Activated T-helper 2 cell treated with anti-CD3 and anti-CD28 coated beads, Interferon-gamma antibody, Interleukin-2, Interleukin-4, amounts not matched to agents 10 μg/mL and 5 μg/mL and 100 μg/mL, durations not matched to agents 14 hours and 24 hours and 36 hours (primary cell): ENCODE measurements at regions of chr1 and their contacts with region 1.

Region 1: DNA sequence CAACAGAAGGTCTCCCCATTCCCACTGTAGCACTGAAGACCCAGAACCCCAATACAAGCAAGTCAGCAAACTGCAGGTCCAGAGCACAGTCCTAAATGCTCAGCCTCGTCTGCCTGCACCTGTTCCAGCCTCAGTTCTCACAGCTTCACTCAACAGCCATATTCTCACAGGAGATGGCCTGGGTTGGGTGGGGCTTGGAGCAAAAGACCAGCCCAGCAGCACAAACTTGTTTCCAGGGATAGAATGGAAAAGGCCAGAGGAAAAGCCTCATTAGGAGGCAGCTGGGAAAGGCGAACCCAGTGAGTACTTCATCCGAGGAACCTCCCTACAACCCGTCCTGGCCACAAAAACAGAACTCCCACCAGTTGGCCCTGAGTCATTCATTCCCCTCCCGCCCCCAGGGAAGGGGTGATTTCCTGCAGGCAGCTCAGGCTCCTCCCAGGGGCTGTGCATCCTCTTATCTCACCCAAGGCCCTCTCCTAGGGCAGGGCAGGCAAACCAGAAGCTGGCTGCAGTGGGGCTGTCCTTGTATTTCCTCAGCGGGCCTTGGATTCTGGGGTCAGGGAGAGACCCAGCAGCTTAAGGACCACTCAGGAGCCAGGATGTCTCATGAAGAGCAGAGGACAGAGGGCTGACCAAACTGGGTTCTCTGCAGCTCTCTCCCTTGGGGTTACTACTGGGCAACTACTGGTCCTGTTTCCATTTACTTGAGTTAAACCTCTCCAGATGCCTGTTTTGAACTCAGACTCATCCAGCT is 7.4 kb upstream of the MPL start:
- DNase-seq: no peak
- H3K4me3 Mint-ChIP-seq: no peak overlapping the region
- H3K27ac Mint-ChIP-seq: peak overlapping the region; percentile 65
- H3K4me1 Mint-ChIP-seq: peaks cover 22% of the 10 kb centered on the region
- H3K27me3 Mint-ChIP-seq: no peaks in the 10 kb centered on the region

Region 2: DNA sequence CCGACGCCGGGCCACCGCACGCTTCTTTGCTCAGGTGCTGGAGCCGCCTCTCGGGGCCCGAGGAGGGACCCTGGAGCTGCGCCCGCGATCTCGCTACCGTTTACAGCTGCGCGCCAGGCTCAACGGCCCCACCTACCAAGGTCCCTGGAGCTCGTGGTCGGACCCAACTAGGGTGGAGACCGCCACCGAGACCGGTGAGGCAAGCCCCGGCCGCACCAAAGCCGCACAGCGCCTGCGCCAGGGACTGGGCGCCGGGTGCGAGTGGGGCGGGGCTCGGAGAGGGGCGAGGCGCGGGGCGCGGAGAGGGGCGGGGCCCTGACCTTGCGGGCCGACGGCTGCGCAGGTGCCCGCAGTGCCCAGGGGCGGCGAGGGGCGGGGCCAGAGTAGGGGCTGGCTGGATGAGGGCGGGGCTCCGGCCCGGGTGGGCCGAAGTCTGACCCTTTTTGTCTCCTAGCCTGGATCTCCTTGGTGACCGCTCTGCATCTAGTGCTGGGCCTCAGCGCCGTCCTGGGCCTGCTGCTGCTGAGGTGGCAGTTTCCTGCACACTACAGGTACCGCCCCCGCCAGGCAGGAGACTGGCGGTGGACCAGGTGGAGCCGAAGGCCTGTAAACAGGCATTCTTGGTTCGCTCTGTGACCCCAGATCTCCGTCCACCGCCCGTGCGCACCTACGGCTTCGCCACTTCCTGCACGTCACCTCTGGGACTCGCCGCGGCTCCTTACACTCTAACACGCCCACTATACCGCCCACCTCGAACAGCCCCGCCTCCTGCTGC is 18.8 kb after region 1 on chr1:
- intact Hi-C with region 1: loop called (anchors 2 kb)
- DNase-seq: peak; percentile 48
- H3K4me3 Mint-ChIP-seq: peak overlapping the region; percentile 65
- H3K27ac Mint-ChIP-seq: peak overlapping the region; percentile 78
- H3K4me1 Mint-ChIP-seq: peaks cover 31% of the 10 kb centered on the region
- H3K27me3 Mint-ChIP-seq: no peaks in the 10 kb centered on the region

Region 3: GRCh38 chr1:43367904-43368645 is 37.9 kb after region 1 on chr1 and contains the start of gene ELOVL1:
- intact Hi-C with region 1: no loop called
- DNase-seq: peak; percentile 86
- H3K4me3 Mint-ChIP-seq: peak within 1 kb of the TSS; percentile 97
- H3K27ac Mint-ChIP-seq: peak within 1 kb of the TSS; percentile 88
- H3K4me1 Mint-ChIP-seq: peaks cover 35% of the 10 kb centered on the region
- H3K27me3 Mint-ChIP-seq: no peaks in the 10 kb centered on the region
- total RNA-seq, gene ELOVL1: 82.7 and 83.6 TPM in 2 replicates

Region 4: GRCh38 chr1:43466403-43466802 is 136.2 kb after region 1 on chr1:
- intact Hi-C with region 1: no loop called
- DNase-seq: no peak
- H3K4me3 Mint-ChIP-seq: no peak overlapping the region
- H3K27ac Mint-ChIP-seq: no peak overlapping the region
- H3K4me1 Mint-ChIP-seq: peaks cover 8% of the 10 kb centered on the region
- H3K27me3 Mint-ChIP-seq: peaks cover 2% of the 10 kb centered on the region